Astrocyte of the cerebellum (primary cell): ENCODE measurements at regions of chr2 and their contacts with region 1.

Region 1: GRCh38 chr2:85994421-85994777 is 105.6 kb upstream of the ST3GAL5 start:
- DNase-seq: no peak
- H3K4me3 ChIP-seq: no peak overlapping the region
- CTCF ChIP-seq: no peak

Region 2: DNA sequence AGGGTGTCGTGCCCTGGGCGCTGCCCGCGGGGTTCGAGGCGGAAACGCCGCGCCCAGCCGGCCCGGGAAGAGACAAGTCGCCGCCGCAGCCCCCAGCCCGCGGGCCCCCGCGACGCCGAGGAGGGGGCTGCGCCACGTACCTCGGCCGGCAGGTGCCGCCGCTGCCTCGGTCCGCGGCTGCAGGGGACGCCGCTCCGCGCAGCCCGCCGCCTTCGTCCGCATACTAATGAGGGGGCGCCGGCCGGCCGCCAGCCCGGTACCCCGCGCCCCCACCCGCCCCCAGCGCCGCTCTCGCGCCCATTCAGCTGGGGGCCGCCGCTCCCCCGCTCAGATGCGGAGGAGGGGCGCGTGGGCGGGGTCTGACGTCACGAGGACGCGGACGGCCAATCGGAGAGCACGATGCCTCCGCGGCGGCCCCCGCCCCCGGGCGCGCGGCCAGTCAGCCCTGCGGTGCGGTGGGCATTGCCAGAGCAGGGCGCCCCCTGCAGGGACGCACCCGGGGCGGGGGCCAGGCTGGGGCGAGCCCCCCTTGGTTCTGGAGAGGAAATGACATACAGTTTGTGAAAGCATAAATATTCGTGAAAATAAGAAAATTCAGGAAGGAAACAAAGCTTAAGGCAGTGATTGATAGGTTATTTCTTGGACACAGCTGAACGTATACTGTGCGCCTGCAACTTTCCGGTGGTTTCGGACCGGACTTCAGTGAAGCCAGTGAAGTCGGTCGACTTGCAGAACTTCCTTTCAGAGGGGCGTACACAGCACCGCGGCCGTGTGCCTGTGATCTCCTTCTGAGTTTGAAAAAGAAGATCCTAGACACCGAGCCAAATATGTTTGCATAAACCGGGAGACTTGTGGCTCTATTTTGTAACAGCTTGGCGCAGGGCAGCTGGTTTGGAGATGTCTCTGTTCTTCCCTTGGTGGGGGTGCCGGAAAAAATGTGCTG is 105.4 kb before region 1 on chr2 and contains the start of gene ST3GAL5:
- in situ Hi-C with region 1: loop called (anchors 5 kb)
- DNase-seq: no peak
- H3K4me3 ChIP-seq: peak within 1 kb of the TSS; percentile 61
- CTCF ChIP-seq: peak; percentile 48